ENCODE measurements at regions of chr11 and their contacts with region 1.

Region 1: GRCh38 chr11:57751676-57752253 is at the start of gene BTBD18:
- DNase-seq: peak in 3 of 4 experiments; percentile 38 to 56 (median 44)
- ATAC-seq: peak; percentile 94
- H3K4me3 ChIP-seq: no peak within 1 kb of the TSS
- H3K27ac ChIP-seq: peak within 1 kb of the TSS; percentile 6; the same call in 1 of the 3 replicates
- H3K4me1 ChIP-seq: peaks cover 0 to 11% of the 10 kb centered on the region in 2 experiments; a peak in 2 of 5 replicates
- H3K27me3 ChIP-seq: no peaks in the 10 kb centered on the region
- CTCF ChIP-seq: peak; percentile 45 to 70 (median 52); a peak in 5 of 6 replicates
- EP300 ChIP-seq: no peak
- POLR2A ChIP-seq: no peak
- RAD21 ChIP-seq: peak; percentile 54 to 67
- polyA plus RNA-seq, gene BTBD18: 0.06 TPM in 1 of 2 experiments, not detected in the other

Region 2: GRCh38 chr11:57792060-57792541 is 40.3 kb after region 1 on chr11:
- CTCF ChIA-PET with region 1: no interaction called
- POLR2A ChIA-PET with region 1: no interaction called
- in situ Hi-C with region 1: loop called (anchors 5 kb)
- intact Hi-C with region 1: no loop called
- DNase-seq: peak in 1 of 4 experiments; percentile 44
- ATAC-seq: peak; percentile 45
- H3K4me3 ChIP-seq: no peak overlapping the region
- H3K27ac ChIP-seq: 0 out of 3 replicates have a peak overlapping the region, but pooled peaks have one; percentile 2
- H3K4me1 ChIP-seq: peaks cover 6 to 11% of the 10 kb centered on the region in 2 experiments
- H3K27me3 ChIP-seq: no peaks in the 10 kb centered on the region
- CTCF ChIP-seq: no peak
- EP300 ChIP-seq: no peak
- POLR2A ChIP-seq: no peak
- RAD21 ChIP-seq: no peak